WTC11 (cell line): ENCODE measurements at regions of chr1 and their contacts with region 1.

Region 1: GRCh38 chr1:119367427-119368124 is 1.0 kb upstream of the HAO2 start:
- DNase-seq: no peak
- ATAC-seq: peak; percentile 65
- H3K4me3 Mint-ChIP-seq: no peak overlapping the region
- H3K27ac Mint-ChIP-seq: no peak overlapping the region
- H3K4me1 Mint-ChIP-seq: peaks cover 47% of the 10 kb centered on the region
- H3K27me3 Mint-ChIP-seq: peaks cover 17% of the 10 kb centered on the region
- CTCF ChIP-seq: peak; percentile 88

Region 2: DNA sequence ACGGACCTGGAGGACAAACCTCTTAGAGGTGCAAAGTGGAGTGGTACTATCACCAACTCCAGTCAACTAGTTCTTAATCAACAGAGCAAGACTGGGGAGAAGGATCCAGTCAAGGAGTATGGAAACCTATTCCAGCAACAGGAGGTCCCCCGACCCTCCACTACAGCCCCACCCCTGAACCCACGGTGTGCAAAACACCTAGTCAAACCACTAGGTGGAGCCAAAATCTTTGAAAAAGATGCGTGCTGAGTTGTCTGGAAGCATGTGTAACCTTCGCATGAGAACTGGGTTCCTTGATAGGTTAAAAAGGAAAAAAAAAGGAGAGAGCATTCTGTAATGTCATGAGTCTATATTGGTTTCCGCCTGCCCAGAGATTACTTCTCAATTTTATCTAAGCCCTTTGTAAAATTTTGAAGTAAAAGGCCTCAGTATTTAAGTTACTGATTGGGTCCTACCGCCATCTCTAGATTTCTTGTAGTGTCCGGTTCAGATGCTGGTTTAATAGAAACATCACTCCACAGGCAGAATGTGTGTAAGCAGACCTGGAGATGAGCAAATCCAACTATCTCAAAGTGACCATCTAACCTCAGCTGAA is 80.9 kb before region 1 on chr1:
- CTCF ChIA-PET with region 1: interaction called, 15 read pairs
- POLR2A ChIA-PET with region 1: interaction called, 3 read pairs
- DNase-seq: peak; percentile 65
- ATAC-seq: peak; percentile 98
- H3K4me3 Mint-ChIP-seq: no peak overlapping the region
- H3K27ac Mint-ChIP-seq: no peak overlapping the region
- H3K4me1 Mint-ChIP-seq: peaks cover 22% of the 10 kb centered on the region
- H3K27me3 Mint-ChIP-seq: no peaks in the 10 kb centered on the region
- CTCF ChIP-seq: peak; percentile 69

Region 3: GRCh38 chr1:119294722-119295121 is 72.9 kb before region 1 on chr1:
- CTCF ChIA-PET with region 1: interaction called, 11 read pairs
- POLR2A ChIA-PET with region 1: no interaction called
- DNase-seq: no peak
- ATAC-seq: peak; percentile 79
- H3K4me3 Mint-ChIP-seq: no peak overlapping the region
- H3K27ac Mint-ChIP-seq: peak overlapping the region; percentile 24; the same call in 1 of the 2 replicates
- H3K4me1 Mint-ChIP-seq: peaks cover 38% of the 10 kb centered on the region
- H3K27me3 Mint-ChIP-seq: no peaks in the 10 kb centered on the region
- CTCF ChIP-seq: no peak

Region 4: DNA sequence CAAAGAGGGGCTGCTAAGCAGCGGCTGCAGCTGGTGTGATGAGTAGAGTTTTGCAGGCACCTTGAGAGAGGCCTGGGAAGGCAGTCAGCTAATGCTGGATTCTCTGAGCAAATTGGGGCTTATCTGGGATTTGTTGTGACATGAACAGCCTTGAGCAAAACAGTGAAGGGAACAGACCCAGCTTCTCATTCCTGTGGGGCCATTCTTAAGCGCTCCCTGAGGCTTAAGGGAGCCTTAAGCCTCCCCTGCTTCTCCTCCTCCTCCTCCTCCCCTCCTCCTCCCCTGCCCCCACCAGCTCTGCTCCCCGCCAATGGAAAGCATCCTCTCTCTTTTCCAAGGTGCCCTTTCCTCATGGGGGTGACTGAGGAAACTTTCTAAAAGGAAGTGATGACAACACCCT is 379.9 kb after region 1 on chr1:
- CTCF ChIA-PET with region 1: no interaction called
- POLR2A ChIA-PET with region 1: no interaction called
- DNase-seq: no peak
- ATAC-seq: peak; percentile 13; the same call in 1 of the 2 replicates
- H3K4me3 Mint-ChIP-seq: no peak overlapping the region
- H3K27ac Mint-ChIP-seq: no peak overlapping the region
- H3K4me1 Mint-ChIP-seq: peaks cover 32% of the 10 kb centered on the region
- H3K27me3 Mint-ChIP-seq: no peaks in the 10 kb centered on the region
- CTCF ChIP-seq: no peak